ENCODE measurements at regions of chr15 and their contacts with region 1.

Region 1: GRCh38 chr15:81410318-81410753 is 36.3 kb upstream of the TMC3 start:
- DNase-seq: peak in 7 of 9 donors; percentile 37 to 77 (median 69)
- ATAC-seq: peak; percentile 80
- H3K4me3 ChIP-seq: no peak overlapping the region
- H3K4me3 Mint-ChIP-seq: peak overlapping the region in 1 of 10 donors; percentile 35
- H3K27ac ChIP-seq: no peak overlapping the region
- H3K27ac Mint-ChIP-seq: peak overlapping the region in 5 of 9 donors; percentile 13 to 86 (median 38)
- H3K4me1 ChIP-seq: peaks cover 0 to 4% of the 10 kb centered on the region in 2 donors
- H3K4me1 Mint-ChIP-seq: peaks cover 10 to 21% (median 17%) of the 10 kb centered on the region in 7 donors
- H3K27me3 ChIP-seq: peaks cover 0 to 3% of the 10 kb centered on the region in 2 donors
- H3K27me3 Mint-ChIP-seq: peaks cover 0 to 36% (median 7%) of the 10 kb centered on the region in 5 donors

Region 2: DNA sequence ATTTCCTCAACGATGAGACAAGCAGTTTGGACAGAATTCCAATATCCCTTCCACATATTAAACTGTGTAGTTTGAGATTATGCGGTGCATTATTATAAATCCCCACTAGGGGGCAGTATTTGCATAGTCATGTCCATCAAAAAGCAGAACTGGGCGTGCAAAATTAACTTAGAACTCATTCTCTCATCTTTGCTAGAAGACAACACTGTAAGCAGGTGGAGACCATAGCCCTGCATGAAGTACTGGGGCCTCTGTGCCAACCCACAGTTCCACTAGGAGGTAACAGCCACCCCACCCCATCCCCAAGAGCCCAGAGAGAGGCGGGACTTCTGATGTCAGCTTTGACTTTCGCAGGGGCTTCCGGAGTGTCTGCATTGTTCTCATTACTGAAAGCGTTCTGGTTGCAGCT is 70.3 kb after region 1 on chr15:
- CTCF ChIA-PET with region 1: interaction called, 3 read pairs
- POLR2A ChIA-PET with region 1: no interaction called
- intact Hi-C with region 1: loop called (anchors 2 to 5 kb)
- DNase-seq: peak in 8 of 9 donors; percentile 10 to 62 (median 48)
- ATAC-seq: peak; percentile 76
- H3K4me3 ChIP-seq: no peak overlapping the region
- H3K4me3 Mint-ChIP-seq: peak overlapping the region in 5 of 10 donors; percentile 21 to 66 (median 53)
- H3K27ac ChIP-seq: no peak overlapping the region
- H3K27ac Mint-ChIP-seq: no peak overlapping the region
- H3K4me1 ChIP-seq: no peaks in the 10 kb centered on the region
- H3K4me1 Mint-ChIP-seq: peaks cover 0 to 3% (median 0%) of the 10 kb centered on the region in 7 donors
- H3K27me3 ChIP-seq: no peaks in the 10 kb centered on the region
- H3K27me3 Mint-ChIP-seq: peaks cover 0 to 9% (median 0%) of the 10 kb centered on the region in 5 donors

Region 3: GRCh38 chr15:81562986-81563385 is 152.7 kb after region 1 on chr15:
- CTCF ChIA-PET with region 1: no interaction called
- POLR2A ChIA-PET with region 1: no interaction called
- intact Hi-C with region 1: no loop called
- DNase-seq: no peak
- ATAC-seq: no peak
- H3K4me3 ChIP-seq: no peak overlapping the region
- H3K4me3 Mint-ChIP-seq: no peak overlapping the region
- H3K27ac ChIP-seq: no peak overlapping the region
- H3K27ac Mint-ChIP-seq: no peak overlapping the region
- H3K4me1 ChIP-seq: no peaks in the 10 kb centered on the region
- H3K4me1 Mint-ChIP-seq: no peaks in the 10 kb centered on the region
- H3K27me3 ChIP-seq: no peaks in the 10 kb centered on the region
- H3K27me3 Mint-ChIP-seq: peaks cover under 1 to 35% (median 2%) of the 10 kb centered on the region in 5 donors

Region 4: GRCh38 chr15:82108489-82109078 is 698.2 kb after region 1 on chr15:
- CTCF ChIA-PET with region 1: no interaction called
- POLR2A ChIA-PET with region 1: no interaction called
- intact Hi-C with region 1: loop called in 1 of 2 experiments (anchors 2 kb)
- DNase-seq: peak; percentile 11 to 79 (median 55)
- ATAC-seq: peak; percentile 92
- H3K4me3 ChIP-seq: no peak overlapping the region
- H3K4me3 Mint-ChIP-seq: no peak overlapping the region
- H3K27ac ChIP-seq: no peak overlapping the region
- H3K27ac Mint-ChIP-seq: no peak overlapping the region
- H3K4me1 ChIP-seq: no peaks in the 10 kb centered on the region
- H3K4me1 Mint-ChIP-seq: peaks cover 0 to 3% (median 0%) of the 10 kb centered on the region in 7 donors
- H3K27me3 ChIP-seq: peaks cover 0 to 3% of the 10 kb centered on the region in 2 donors
- H3K27me3 Mint-ChIP-seq: no peaks in the 10 kb centered on the region

Region 5: GRCh38 chr15:82139823-82140268 is 729.5 kb after region 1 on chr15:
- CTCF ChIA-PET with region 1: no interaction called
- POLR2A ChIA-PET with region 1: no interaction called
- intact Hi-C with region 1: loop called in 1 of 2 experiments (anchors 2 kb)
- DNase-seq: peak in 5 of 9 donors; percentile 16 to 45 (median 23)
- ATAC-seq: no peak
- H3K4me3 ChIP-seq: no peak overlapping the region
- H3K4me3 Mint-ChIP-seq: peak overlapping the region in 1 of 10 donors; percentile 10
- H3K27ac ChIP-seq: no peak overlapping the region
- H3K27ac Mint-ChIP-seq: peak overlapping the region in 2 of 9 donors; percentile 18 to 19
- H3K4me1 ChIP-seq: no peaks in the 10 kb centered on the region
- H3K4me1 Mint-ChIP-seq: peaks cover 0 to 14% (median 6%) of the 10 kb centered on the region in 7 donors
- H3K27me3 ChIP-seq: no peaks in the 10 kb centered on the region
- H3K27me3 Mint-ChIP-seq: no peaks in the 10 kb centered on the region

Region 6: DNA sequence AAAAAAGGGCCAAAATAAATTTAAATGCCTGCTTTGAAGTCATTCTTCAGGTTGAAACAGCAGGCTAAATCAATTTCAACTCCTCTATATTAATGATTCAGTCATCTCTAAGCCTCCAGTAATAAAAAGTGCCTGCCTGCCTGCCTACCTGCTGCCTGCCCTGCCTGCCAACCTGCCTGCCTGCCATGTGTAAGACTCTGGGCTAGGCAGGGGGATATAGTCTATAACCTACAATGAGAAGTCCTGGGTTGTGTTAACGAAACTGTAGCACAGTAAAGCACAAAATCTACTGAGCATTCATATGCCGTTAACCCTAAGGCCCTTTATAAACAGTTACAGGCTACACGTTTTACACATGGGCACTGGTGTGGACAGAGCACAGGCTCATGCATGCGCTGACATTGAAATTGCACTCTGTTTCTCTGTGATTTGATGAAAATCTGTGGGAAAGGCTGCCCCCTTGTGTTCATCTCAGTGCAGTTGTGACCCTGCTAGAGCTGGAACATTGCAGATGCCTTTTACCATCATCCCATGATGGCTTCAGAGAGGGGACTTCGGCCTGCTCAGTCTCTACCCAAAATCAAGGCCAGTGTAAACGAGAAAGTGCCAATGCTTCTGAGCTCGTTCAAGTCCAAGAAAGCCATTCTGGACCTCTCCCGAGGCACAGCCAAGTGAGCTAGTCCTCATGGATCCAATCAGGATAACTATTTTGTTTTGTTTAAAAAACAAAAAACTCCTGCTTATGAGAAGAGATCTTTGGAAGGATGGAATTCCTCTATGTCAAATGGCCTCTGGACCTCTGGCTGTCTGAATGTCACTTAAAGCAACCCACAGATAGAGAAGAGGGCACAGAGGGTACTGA is 787.6 kb after region 1 on chr15:
- CTCF ChIA-PET with region 1: no interaction called
- POLR2A ChIA-PET with region 1: no interaction called
- intact Hi-C with region 1: loop called (anchors 1 to 5 kb)
- DNase-seq: peak; percentile 6 to 61 (median 46)
- ATAC-seq: peak; percentile 81
- H3K4me3 ChIP-seq: no peak overlapping the region
- H3K4me3 Mint-ChIP-seq: no peak overlapping the region
- H3K27ac ChIP-seq: no peak overlapping the region
- H3K27ac Mint-ChIP-seq: peak overlapping the region in 1 of 9 donors; percentile 12
- H3K4me1 ChIP-seq: no peaks in the 10 kb centered on the region
- H3K4me1 Mint-ChIP-seq: peaks cover 0 to 6% (median 3%) of the 10 kb centered on the region in 7 donors
- H3K27me3 ChIP-seq: no peaks in the 10 kb centered on the region
- H3K27me3 Mint-ChIP-seq: no peaks in the 10 kb centered on the region